HCT116 (cell line): ENCODE measurements at regions of chr6 and their contacts with region 1.

Region 1: DNA sequence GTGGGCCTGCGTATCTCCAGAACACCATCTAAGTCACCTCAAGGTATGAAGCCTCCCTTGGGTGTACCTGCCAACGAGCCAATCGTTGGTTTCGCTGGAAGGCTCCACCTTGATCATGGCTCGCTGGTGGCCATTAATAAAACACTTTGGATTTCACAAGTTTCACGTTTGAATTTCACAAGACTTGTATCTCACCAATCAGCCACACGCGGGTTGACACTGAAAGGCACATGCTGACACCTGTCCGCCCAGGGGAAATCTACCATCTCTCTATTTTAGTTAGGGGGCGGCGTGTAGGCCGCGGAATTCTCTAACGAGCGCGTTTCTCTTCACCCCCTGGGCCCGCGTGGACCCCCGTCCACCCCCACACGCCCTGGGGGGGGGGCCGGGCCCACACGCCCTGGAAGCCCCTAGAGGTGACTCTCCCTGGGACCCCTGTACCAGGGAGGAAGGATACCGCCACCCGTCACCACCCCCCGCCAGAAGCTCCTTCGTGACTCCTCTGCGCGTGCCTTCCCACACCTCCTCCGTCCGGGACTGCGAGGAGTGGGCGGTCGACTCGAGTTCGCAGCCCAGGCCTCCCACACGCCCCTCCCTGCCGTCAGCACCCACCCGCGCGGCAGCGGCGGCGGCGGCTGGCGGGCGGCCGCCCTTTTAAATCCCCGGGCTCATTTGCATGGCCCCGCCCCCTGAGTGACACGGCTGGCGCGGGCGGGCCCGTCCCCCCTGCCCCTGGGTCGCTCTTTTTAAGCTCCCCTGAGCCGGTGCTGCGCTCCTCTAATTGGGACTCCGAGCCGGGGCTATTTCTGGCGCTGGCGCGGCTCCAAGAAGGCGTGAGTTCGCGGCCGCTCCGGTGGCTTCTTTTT is at the start of gene HMGA1:
- DNase-seq: no peak
- ATAC-seq: peak; percentile 66
- H3K4me3 ChIP-seq: peak within 1 kb of the TSS; percentile 69 to 93
- H3K27ac ChIP-seq: peak within 1 kb of the TSS; percentile 95
- H3K4me1 ChIP-seq: peaks cover 33 to 81% of the 10 kb centered on the region in 2 experiments
- H3K27me3 ChIP-seq: no peaks in the 10 kb centered on the region
- CTCF ChIP-seq: no peak; a peak in 1 of 6 replicates
- POLR2A ChIP-seq: peak; percentile 98
- RAD21 ChIP-seq: no peak
- total RNA-seq, gene HMGA1: 2,459 TPM

Region 2: DNA sequence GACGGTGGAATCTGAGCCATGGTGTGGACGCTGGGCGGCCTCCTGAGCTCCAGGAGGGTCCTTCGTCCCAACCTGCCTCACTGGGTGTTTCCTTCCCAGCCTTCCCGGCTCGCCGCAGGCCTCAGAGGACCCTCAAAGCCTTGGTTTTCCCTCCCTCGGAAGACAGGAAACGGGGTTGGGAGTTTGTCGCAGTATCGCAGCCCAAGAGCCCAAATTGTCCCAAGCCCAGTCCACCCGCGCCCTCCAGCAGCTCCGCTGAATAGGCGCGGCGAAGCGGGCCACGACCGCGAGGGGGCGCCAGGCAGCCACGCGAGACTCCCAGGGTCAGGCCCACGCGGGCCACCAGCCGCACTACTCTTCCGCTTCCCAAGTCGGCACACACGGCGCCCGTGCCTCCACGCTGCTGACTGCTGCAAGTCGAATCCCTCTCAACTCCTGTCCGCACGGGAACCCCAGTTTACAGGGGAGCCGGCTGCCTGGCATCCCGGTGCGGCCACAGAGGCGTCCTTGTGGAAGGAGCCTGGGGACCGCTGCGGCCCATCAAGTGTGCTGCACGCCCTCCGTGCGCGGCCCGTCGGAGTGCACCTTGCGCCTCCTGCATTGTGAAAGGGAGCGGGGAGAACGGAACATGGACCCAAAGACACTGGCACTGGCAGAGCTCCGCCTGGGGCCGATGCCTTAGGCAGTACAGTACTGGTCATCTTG is 40.1 kb before region 1 on chr6:
- CTCF ChIA-PET with region 1: interaction called, 6 read pairs
- POLR2A ChIA-PET with region 1: interaction called, 31 read pairs
- RAD21 ChIA-PET with region 1: no interaction called
- intact Hi-C with region 1: no loop called
- DNase-seq: peak; percentile 26
- ATAC-seq: peak; percentile 91
- H3K4me3 ChIP-seq: peak overlapping the region in 1 of 2 experiments; percentile 28; a peak in 2 of 4 replicates
- H3K27ac ChIP-seq: no peak overlapping the region; the same call in 1 of the 2 replicates
- H3K4me1 ChIP-seq: peaks cover 4 to 31% of the 10 kb centered on the region in 2 experiments
- H3K27me3 ChIP-seq: no peaks in the 10 kb centered on the region
- CTCF ChIP-seq: peak; percentile 71 to 90 (median 79)
- POLR2A ChIP-seq: peak; percentile 32
- RAD21 ChIP-seq: peak; percentile 96

Region 3: GRCh38 chr6:34223956-34224940 is 12.1 kb before region 1 on chr6:
- CTCF ChIA-PET with region 1: no interaction called
- POLR2A ChIA-PET with region 1: interaction called, 46 read pairs
- RAD21 ChIA-PET with region 1: no interaction called
- intact Hi-C with region 1: loop called (anchors 1 kb)
- DNase-seq: no peak
- ATAC-seq: peak; percentile 80
- H3K4me3 ChIP-seq: peak overlapping the region; percentile 36 to 59
- H3K27ac ChIP-seq: peak overlapping the region; percentile 92
- H3K4me1 ChIP-seq: peaks cover 54 to 69% of the 10 kb centered on the region in 2 experiments
- H3K27me3 ChIP-seq: no peaks in the 10 kb centered on the region
- CTCF ChIP-seq: no peak
- POLR2A ChIP-seq: peak; percentile 27
- RAD21 ChIP-seq: no peak